Endothelial cell of umbilical vein (primary cell): ENCODE measurements at regions of chr11 and their contacts with region 1.

Region 1: DNA sequence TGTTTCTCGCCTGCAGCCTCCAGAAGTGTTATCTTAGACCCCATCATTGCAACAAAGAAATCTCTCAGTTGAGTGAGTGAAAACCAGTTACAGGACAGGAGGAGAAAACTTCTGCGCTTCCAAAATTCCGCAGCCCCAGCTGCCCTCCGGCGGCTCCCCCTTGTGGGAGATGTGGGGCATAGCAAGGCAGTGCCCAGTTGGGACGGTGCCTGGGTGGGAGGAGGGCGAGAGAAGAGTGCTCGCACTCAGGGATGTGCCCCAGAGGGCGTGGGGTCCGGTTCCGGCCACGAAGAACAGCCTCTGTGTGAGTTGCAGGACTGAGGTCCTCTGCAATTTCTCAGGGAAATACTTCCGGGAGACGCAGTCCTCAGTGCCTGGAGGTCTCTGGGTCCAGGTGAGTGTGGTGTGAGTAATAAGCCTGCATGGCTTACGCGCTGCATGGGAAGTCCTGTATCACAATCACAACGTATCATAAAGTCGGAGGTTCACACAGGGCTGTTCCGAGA is 87.0 kb upstream of the BLID start:
- DNase-seq: no peak
- H3K4me3 ChIP-seq: peak overlapping the region in 2 of 3 experiments; percentile 28 to 72
- H3K27ac ChIP-seq: peak overlapping the region; percentile 74
- H3K4me1 ChIP-seq: peaks cover 42% of the 10 kb centered on the region
- H3K27me3 ChIP-seq: no peaks in the 10 kb centered on the region
- CTCF ChIP-seq: peak; percentile 96 to 99
- POLR2A ChIP-seq: no peak

Region 2: GRCh38 chr11:121655537-121656327 is 547.3 kb before region 1 on chr11:
- CTCF ChIA-PET with region 1: interaction called, 33 read pairs
- POLR2A ChIA-PET with region 1: no interaction called
- dilution Hi-C with region 1: no loop called
- intact Hi-C with region 1: loop called (anchors 1 kb)
- DNase-seq: peak; percentile 87
- H3K4me3 ChIP-seq: peak overlapping the region; percentile 6 to 68 (median 39)
- H3K27ac ChIP-seq: peak overlapping the region; percentile 69
- H3K4me1 ChIP-seq: peaks cover 2% of the 10 kb centered on the region
- H3K27me3 ChIP-seq: peaks cover 5 to 11% of the 10 kb centered on the region in 2 experiments
- CTCF ChIP-seq: peak; percentile 84 to 98
- POLR2A ChIP-seq: no peak

Region 3: GRCh38 chr11:122020902-122021301 is 182.1 kb before region 1 on chr11:
- CTCF ChIA-PET with region 1: interaction called, 58 read pairs
- POLR2A ChIA-PET with region 1: no interaction called
- dilution Hi-C with region 1: no loop called
- intact Hi-C with region 1: loop called (anchors 1 kb)
- DNase-seq: peak; percentile 46
- H3K4me3 ChIP-seq: no peak overlapping the region
- H3K27ac ChIP-seq: no peak overlapping the region
- H3K4me1 ChIP-seq: no peaks in the 10 kb centered on the region
- H3K27me3 ChIP-seq: no peaks in the 10 kb centered on the region
- CTCF ChIP-seq: peak; percentile 38 to 57
- POLR2A ChIP-seq: no peak

Region 4: DNA sequence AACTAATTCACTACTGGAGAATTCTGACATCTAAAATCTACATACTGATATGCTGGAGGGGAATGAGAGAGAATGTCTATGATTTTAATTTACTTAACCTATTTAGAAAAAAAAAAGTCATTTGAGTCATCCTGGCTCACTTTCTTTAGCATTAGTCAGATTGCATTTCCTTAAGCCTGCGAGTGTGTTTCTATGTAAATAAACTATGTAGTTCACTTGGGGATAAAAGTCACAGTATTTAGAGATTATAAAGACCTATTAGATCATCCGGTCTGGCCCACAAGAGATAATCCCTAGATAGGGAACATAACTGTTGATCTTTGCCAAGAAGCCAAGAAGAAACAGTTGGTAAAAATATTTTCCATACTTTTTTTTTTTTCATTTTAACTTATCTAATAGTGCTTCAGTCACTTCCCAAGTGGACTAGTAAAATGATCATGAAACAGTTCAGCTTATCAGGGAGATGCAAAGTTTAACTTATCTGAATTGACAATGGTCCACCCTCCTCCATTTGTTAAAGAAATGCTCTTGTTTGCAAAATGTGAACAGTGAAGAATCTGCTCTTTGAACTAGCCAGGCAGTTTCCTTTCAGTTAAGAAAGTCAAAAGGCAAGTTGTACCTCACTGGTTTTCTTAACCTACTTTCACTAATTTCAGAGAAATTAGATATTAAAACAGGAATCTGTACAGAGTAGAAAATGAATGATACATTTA is 65.8 kb before region 1 on chr11:
- CTCF ChIA-PET with region 1: interaction called, 21 read pairs
- POLR2A ChIA-PET with region 1: no interaction called
- dilution Hi-C with region 1: no loop called
- intact Hi-C with region 1: loop called (anchors 1 kb)
- DNase-seq: peak; percentile 88
- H3K4me3 ChIP-seq: peak overlapping the region in 1 of 3 experiments; percentile 8
- H3K27ac ChIP-seq: peak overlapping the region; percentile 79
- H3K4me1 ChIP-seq: peaks cover 65% of the 10 kb centered on the region
- H3K27me3 ChIP-seq: no peaks in the 10 kb centered on the region
- CTCF ChIP-seq: no peak
- POLR2A ChIP-seq: peak; percentile 30

Region 5: GRCh38 chr11:122173587-122173986 is 29.4 kb before region 1 on chr11:
- CTCF ChIA-PET with region 1: interaction called, 22 read pairs
- POLR2A ChIA-PET with region 1: no interaction called
- dilution Hi-C with region 1: no loop called
- intact Hi-C with region 1: no loop called
- DNase-seq: no peak
- H3K4me3 ChIP-seq: no peak overlapping the region
- H3K27ac ChIP-seq: no peak overlapping the region
- H3K4me1 ChIP-seq: peaks cover 64% of the 10 kb centered on the region
- H3K27me3 ChIP-seq: no peaks in the 10 kb centered on the region
- CTCF ChIP-seq: no peak
- POLR2A ChIP-seq: no peak

Region 6: DNA sequence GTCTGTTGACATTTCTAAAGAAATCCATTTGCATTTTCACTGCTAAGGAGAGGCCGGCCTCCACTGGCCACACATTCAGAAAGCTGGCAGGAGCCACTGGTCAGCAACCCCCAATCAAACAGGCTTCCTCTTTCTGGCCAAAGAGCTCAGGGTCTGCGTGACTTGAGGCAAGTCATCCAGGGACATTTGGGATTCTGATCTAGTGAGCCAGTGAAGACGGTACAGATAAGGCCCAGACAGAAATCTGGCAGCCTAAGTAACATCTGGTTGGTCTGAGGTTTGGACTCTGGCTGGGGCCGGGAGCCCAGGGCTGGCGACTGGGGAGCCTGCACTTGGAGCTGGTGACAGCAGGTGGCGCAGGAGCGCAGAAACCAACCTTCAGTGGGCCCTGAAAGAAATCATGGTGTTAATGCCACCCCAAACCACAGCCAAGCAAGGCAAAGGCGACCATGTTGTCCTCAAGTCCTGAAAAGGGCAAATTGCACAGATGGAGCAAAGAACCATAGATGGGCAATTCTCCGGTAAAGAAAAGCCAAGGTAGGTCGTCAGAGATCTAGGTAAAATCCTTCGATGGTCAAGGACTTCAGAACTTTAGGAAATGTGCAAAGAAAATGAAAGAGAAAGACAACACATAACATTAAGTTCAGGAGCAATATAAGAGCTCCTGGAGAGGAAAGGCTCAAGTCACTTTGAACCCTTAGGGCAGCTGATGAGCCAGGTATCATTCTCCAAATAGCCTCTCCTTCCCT is 12.4 kb after region 1 on chr11:
- CTCF ChIA-PET with region 1: interaction called, 32 read pairs
- POLR2A ChIA-PET with region 1: no interaction called
- dilution Hi-C with region 1: no loop called
- intact Hi-C with region 1: no loop called
- DNase-seq: peak; percentile 79
- H3K4me3 ChIP-seq: no peak overlapping the region
- H3K27ac ChIP-seq: no peak overlapping the region
- H3K4me1 ChIP-seq: peaks cover 6% of the 10 kb centered on the region
- H3K27me3 ChIP-seq: peaks cover 0 to 3% of the 10 kb centered on the region in 2 experiments
- CTCF ChIP-seq: peak; percentile 96 to 98
- POLR2A ChIP-seq: no peak